Sciatic nerve (tissue), 2 donors: ENCODE measurements at regions of chr2 and their contacts with region 1.

Region 1: GRCh38 chr2:26095758-26096157 is 61.9 kb downstream of the RAB10 start:
- DNase-seq: no peak
- ATAC-seq: no peak

Region 2: GRCh38 chr2:26164231-26164630 is 68.5 kb after region 1 on chr2:
- intact Hi-C with region 1: no loop called
- DNase-seq: peak; percentile 15
- ATAC-seq: no peak

Region 3: GRCh38 chr2:26238311-26238958 is 142.7 kb after region 1 on chr2:
- intact Hi-C with region 1: loop called (anchors 2 kb)
- DNase-seq: no peak
- ATAC-seq: no peak